Cardiac septum (tissue), 1 donor: ENCODE measurements at regions of chr7 and their contacts with region 1.

Region 1: GRCh38 chr7:30225863-30226613 is 58.4 kb upstream of the ZNRF2 start:
- DNase-seq: no peak

Region 2: GRCh38 chr7:30074422-30075030 is 151.5 kb before region 1 on chr7:
- intact Hi-C with region 1: no loop called
- DNase-seq: no peak

Region 3: GRCh38 chr7:30178748-30179436 is 47.1 kb before region 1 on chr7:
- intact Hi-C with region 1: loop called (anchors 5 kb)
- DNase-seq: no peak